ENCODE measurements at regions of chr11 and their contacts with region 1.

Region 1: DNA sequence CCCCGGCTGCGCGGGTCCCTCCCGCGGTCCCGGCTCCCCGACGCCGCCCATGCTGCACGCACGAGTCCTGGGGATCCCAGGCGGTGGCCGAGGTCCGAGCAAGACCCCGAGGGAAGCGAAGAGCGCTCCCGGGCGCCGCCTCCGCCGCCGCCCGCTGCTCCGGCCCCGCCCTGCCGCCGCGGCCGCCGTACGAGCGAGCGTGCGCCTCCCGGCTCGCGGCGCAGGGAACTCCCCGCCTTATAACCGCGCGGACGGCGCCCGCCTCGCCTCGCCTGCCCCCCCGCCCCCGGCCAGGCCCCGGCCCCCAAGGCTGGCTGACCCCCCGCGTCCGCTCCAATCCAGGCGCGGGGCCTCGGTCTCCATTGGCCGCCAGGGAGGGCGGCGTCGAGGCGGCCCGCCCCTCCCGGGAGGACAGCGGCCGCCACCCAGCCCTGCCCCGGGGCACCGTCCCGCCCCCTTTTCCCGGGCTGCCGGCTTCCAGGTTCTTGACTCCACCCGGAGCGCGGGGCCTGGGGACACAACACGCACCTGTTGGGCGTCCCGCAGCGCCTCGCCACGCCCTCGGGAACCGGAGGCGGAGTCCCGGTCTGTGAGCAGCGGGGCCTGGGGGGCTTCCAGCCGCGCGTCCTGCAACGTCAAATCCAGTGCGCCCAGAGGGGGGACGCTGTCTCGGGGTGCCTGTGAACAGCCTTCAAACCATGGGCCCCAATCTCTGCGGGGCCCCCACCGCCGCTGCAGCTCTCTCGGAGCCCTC is at the start of gene FADS3:
- DNase-seq: peak; percentile 68 to 97 (median 78)

Region 2: DNA sequence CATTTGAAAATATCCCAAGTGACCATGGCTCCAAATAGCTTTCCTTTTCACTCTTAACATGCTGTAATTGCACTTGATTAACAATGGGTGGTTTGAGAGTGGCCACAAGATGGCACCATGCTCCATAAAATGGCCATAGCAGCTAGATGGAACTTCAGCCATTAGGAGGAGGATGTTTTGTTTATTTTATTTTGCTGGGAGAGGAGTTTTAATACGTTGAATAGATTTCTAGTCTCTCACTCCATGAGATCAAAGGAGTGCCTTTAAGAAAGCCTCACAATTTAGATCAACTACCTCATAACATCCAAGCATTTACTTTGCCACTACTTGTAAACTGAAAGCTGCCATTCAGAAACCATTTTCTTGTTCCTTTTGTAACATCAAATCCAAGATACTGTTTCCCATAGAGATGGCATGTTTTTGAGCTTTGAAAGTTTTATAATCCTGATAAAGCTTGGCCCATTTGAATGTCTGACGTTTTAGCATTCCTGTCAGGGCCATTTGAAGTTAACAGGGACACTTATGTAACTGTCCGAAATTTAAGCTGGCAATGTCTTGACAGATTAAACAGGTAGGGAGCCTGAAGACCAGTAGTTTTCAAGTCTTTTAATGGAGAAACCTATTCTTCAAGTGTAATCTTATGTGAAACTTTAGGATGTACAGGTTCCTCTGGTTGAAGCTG is 94.1 kb before region 1 on chr11:
- intact Hi-C with region 1: loop called (anchors 1 kb)
- DNase-seq: peak in 6 of 10 donors; percentile 80 to 94 (median 84)

Region 3: GRCh38 chr11:61816736-61817455 is 74.6 kb before region 1 on chr11 and contains the start of gene FADS1:
- intact Hi-C with region 1: loop called (anchors 5 kb)
- DNase-seq: peak; percentile 88 to 99 (median 96)

Region 4: GRCh38 chr11:61940466-61940865 is 49.0 kb after region 1 on chr11:
- intact Hi-C with region 1: no loop called
- DNase-seq: no peak

Measured in posterior cingulate gyrus (tissue), 11 donors.